H1 (cell line): ENCODE measurements at regions of chr9 and their contacts with region 1.

Region 1: DNA sequence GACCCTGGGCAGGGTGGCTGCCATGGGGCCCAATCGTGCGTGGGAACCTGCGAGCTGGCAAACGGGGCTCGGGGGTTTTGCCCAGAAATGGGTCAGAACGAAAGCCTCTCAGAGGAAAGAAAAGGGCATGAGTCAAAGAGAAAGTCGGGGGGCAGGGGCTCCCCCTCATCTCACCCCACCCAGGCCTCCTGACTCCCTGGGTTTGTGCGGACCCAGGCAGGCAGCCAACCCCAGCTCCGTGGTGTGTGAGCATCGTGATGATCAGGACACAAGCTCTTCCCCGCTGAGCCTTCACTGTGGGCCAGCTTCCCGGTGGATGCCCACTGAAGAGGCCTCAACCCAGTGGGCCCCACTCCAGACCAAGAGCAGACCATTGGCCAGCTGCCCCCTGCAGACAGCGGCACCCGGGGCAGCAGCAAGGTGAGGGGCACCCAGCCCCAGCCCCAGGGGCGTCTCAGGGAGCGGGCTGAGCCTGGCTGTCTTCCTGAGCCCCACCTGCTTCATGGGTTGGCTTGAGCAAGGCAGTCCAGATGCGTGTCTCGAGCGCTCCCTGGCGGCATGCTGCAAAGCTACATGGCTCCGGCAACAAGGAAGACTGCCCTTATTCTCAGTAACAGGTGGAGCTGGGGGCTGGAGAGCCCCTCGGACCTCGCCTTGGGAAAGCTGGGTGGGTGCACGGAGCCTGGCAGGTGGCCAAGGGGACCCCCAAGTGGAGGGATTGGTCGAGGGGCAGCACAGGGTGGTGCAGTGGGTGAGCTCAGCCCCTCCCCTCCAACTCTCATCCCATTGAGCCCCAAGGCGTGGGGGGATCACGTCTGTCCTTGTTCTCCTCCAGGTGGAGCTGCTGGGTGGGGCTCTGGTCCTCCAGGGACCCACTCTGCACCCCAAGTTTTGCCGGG is 3.2 kb upstream of the FUT7 start:
- DNase-seq: peak; percentile 73 to 94
- H3K4me3 ChIP-seq: no peak overlapping the region; a peak in 1 of 8 replicates
- H3K27ac ChIP-seq: no peak overlapping the region
- H3K4me1 ChIP-seq: peaks cover 0 to 2% (median 0%) of the 10 kb centered on the region in 4 experiments; a peak in 3 of 7 replicates
- H3K27me3 ChIP-seq: no peaks in the 10 kb centered on the region; a peak in 3 of 7 replicates
- CTCF ChIP-seq: peak in 2 of 3 experiments; percentile 93 to 95; a peak in 3 of 4 replicates
- EP300 ChIP-seq: no peak
- POLR2A ChIP-seq: no peak
- RAD21 ChIP-seq: peak; percentile 87 to 90

Region 2: GRCh38 chr9:136803551-136804226 is 231.4 kb before region 1 on chr9:
- CTCF ChIA-PET with region 1: no interaction called
- POLR2A ChIA-PET with region 1: no interaction called
- DNase-seq: no peak
- H3K4me3 ChIP-seq: no peak overlapping the region
- H3K27ac ChIP-seq: no peak overlapping the region
- H3K4me1 ChIP-seq: peaks cover 0 to 20% (median 12%) of the 10 kb centered on the region in 4 experiments; a peak in 6 of 7 replicates
- H3K27me3 ChIP-seq: peaks cover 0 to 29% (median 15%) of the 10 kb centered on the region in 4 experiments; a peak in 5 of 7 replicates
- CTCF ChIP-seq: no peak
- EP300 ChIP-seq: no peak
- POLR2A ChIP-seq: no peak
- RAD21 ChIP-seq: no peak

Region 3: GRCh38 chr9:136949817-136950655 is 85.1 kb before region 1 on chr9:
- CTCF ChIA-PET with region 1: interaction called, 63 read pairs
- POLR2A ChIA-PET with region 1: interaction called, 3 read pairs
- DNase-seq: peak; percentile 84 to 99
- H3K4me3 ChIP-seq: peak overlapping the region; percentile 36 to 55 (median 49)
- H3K27ac ChIP-seq: peak overlapping the region; percentile 20; the same call in 1 of the 2 replicates
- H3K4me1 ChIP-seq: peaks cover 0 to 16% (median 11%) of the 10 kb centered on the region in 4 experiments; a peak in 5 of 7 replicates
- H3K27me3 ChIP-seq: no peaks in the 10 kb centered on the region
- CTCF ChIP-seq: no peak
- EP300 ChIP-seq: no peak
- POLR2A ChIP-seq: peak in 1 of 2 experiments; percentile 29; a peak in 1 of 3 replicates
- RAD21 ChIP-seq: no peak

Region 4: GRCh38 chr9:136991993-136992818 is 42.9 kb before region 1 on chr9 and contains the start of gene PAXX:
- CTCF ChIA-PET with region 1: interaction called, 29 read pairs
- POLR2A ChIA-PET with region 1: no interaction called
- DNase-seq: peak; percentile 65 to 96
- H3K4me3 ChIP-seq: peak within 1 kb of the TSS; percentile 46 to 89 (median 74)
- H3K27ac ChIP-seq: peak within 1 kb of the TSS; percentile 3; the same call in 1 of the 2 replicates
- H3K4me1 ChIP-seq: peaks cover 0 to 16% (median 7%) of the 10 kb centered on the region in 4 experiments; a peak in 6 of 7 replicates
- H3K27me3 ChIP-seq: peaks cover 0 to 17% (median 12%) of the 10 kb centered on the region in 4 experiments; a peak in 3 of 7 replicates
- CTCF ChIP-seq: no peak
- EP300 ChIP-seq: no peak
- POLR2A ChIP-seq: no peak; a peak in 1 of 3 replicates
- RAD21 ChIP-seq: no peak
- total RNA-seq, gene PAXX: 40.8 and 43.4 TPM in 2 replicates

Region 5: DNA sequence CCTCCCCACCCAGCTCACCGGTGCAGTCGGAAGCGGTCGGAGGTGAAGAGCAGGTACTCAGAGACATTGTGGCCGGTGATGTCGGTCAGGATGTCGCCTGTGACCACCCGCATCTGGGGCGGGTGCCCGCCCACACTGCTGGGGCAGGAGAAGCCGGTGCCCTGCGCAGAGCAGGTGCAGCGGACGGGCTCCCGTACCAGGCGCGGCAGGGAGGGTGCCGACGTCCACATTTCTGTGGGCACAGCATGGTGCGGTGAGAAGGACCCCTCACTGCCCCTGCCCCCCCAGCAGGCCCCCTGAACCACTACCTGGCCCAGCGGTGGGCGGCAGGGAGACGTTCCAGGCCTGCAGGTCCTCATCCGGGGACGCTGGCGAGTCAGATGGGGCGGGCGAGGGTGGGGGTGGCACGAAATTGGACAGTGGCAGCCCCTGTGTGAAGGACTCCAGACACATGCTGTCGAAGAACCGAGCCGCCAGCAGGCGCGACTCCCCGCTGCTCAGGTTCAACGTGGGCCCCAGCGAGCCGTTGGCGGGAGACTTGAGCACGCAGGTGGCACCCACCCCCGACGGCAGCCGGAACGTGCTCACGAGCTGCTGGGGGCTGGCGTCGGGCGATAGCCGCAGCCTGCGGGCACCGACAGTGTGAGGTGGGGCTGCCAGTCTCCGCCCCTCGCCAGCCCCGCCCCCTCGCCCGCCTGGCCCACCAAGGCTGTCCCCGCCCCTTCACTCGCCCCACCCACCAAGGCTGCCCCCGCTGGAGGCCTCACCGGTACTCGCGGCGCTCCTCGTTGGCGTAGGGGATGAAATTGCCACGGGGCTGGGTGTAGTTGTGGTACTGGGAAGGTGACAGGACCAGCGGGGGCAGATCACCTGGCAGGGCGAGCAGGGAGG is 22.2 kb before region 1 on chr9:
- CTCF ChIA-PET with region 1: interaction called, 54 read pairs
- POLR2A ChIA-PET with region 1: no interaction called
- DNase-seq: peak in 1 of 2 experiments; percentile 64
- H3K4me3 ChIP-seq: no peak overlapping the region
- H3K27ac ChIP-seq: no peak overlapping the region
- H3K4me1 ChIP-seq: peaks cover 0 to 5% (median under 1%) of the 10 kb centered on the region in 4 experiments; a peak in 2 of 7 replicates
- H3K27me3 ChIP-seq: no peaks in the 10 kb centered on the region; a peak in 1 of 7 replicates
- CTCF ChIP-seq: no peak
- EP300 ChIP-seq: no peak
- POLR2A ChIP-seq: no peak
- RAD21 ChIP-seq: no peak

Region 6: DNA sequence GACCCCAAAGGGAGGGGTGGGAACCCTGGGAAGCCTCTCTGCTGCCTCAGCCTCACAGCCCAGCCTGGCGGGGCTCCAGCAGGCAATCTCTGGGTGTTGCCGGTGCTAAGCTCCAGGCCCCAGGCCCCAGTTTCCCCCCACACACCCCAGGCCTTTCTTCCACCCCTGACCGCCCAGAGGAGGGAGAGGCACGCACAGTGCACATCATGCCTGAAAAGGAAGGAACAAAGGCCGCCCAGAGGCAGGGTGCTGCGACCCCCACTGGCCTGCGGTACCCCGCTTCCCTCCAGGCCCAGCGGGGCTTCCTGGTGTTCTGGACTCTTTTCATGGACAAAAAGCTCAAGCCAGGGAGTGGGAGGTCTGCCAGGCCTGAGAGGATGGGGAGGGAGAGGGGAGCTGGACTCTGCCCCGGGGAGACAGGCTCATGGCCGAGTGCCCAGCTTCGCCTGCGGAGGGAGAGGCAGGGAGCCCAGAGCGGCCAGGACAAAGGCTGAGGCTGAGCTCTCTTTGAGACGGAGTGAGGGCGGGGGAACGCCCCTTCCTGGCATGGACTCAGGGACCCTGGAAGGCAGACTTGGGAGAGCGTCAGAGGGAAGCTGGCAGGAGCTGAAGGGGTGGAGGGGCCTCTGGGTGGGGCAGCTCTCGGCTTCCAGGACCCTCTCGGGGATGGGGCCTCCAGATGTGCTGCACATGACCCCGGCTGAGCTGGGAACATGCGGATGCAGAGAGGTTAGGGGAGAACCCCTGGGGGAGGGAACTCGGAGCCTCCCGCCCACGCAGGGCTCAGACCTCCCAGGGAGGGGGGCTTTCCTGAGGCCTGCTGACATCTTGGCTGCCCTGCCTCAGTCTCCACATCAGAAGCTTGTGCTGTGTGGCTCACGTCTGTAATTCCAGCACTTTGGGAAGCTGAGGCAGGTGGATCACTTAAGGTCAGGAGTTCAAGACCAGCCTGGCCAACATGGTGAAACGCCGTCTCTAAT is 20.6 kb after region 1 on chr9:
- CTCF ChIA-PET with region 1: interaction called, 26 read pairs
- POLR2A ChIA-PET with region 1: interaction called, 3 read pairs
- DNase-seq: no peak
- H3K4me3 ChIP-seq: no peak overlapping the region
- H3K27ac ChIP-seq: no peak overlapping the region
- H3K4me1 ChIP-seq: peaks cover 0 to 18% (median 11%) of the 10 kb centered on the region in 4 experiments; a peak in 5 of 7 replicates
- H3K27me3 ChIP-seq: peaks cover 10 to 45% (median 36%) of the 10 kb centered on the region in 4 experiments
- CTCF ChIP-seq: no peak
- EP300 ChIP-seq: no peak
- POLR2A ChIP-seq: no peak
- RAD21 ChIP-seq: no peak

Region 7: DNA sequence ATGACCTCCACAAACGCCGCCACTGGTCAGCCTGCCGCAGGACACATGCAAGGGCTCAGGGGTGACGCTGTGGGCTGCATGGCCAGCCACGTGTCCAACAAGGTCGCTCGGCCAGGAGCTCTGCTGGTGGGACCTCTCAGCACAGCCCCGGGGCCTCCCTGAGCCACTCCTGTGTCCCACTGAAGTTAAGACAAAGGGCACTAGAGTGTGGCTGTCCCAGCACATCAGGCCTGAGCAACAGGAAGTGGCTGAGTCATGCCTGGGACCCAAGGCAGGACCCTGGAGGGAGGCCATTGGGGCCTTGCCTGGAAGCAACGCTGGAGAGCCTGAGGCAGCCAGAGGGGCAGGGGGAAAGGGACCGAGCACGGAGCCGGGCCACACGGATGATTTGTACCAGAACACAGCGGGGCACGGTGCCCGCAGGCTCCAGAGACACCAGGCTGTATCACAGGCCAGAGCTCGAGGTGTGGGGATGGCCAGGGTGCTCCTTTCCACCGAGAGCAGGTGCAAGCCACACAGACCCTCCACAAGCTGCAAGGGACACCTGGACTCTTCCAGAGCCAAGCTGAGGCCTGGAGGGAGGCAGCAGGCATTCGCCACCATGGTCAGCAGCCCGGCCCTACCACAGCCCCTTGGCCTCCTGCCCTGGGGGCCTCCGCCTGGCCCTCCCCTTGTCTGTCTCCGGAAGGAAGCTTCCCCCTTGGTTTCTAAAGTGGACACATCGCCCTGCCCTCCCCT is 143.3 kb after region 1 on chr9:
- CTCF ChIA-PET with region 1: no interaction called
- POLR2A ChIA-PET with region 1: no interaction called
- DNase-seq: no peak
- H3K4me3 ChIP-seq: no peak overlapping the region
- H3K27ac ChIP-seq: no peak overlapping the region
- H3K4me1 ChIP-seq: peaks cover 0 to 8% (median 3%) of the 10 kb centered on the region in 4 experiments; a peak in 5 of 7 replicates
- H3K27me3 ChIP-seq: no peaks in the 10 kb centered on the region; a peak in 3 of 7 replicates
- CTCF ChIP-seq: no peak
- EP300 ChIP-seq: no peak
- POLR2A ChIP-seq: no peak
- RAD21 ChIP-seq: no peak